Cardiac septum (tissue), 1 donor: ENCODE measurements at regions of chr5 and their contacts with region 1.

Region 1: GRCh38 chr5:73740274-73740790 is 114.3 kb downstream of the ARHGEF28 start:
- DNase-seq: no peak

Region 2: GRCh38 chr5:73066466-73066865 is 673.9 kb before region 1 on chr5:
- intact Hi-C with region 1: no loop called
- DNase-seq: no peak

Region 3: GRCh38 chr5:73448463-73449136 is 291.7 kb before region 1 on chr5 and contains the start of gene FOXD1:
- intact Hi-C with region 1: no loop called
- DNase-seq: no peak
- total RNA-seq, gene FOXD1: 0.54 TPM

Region 4: DNA sequence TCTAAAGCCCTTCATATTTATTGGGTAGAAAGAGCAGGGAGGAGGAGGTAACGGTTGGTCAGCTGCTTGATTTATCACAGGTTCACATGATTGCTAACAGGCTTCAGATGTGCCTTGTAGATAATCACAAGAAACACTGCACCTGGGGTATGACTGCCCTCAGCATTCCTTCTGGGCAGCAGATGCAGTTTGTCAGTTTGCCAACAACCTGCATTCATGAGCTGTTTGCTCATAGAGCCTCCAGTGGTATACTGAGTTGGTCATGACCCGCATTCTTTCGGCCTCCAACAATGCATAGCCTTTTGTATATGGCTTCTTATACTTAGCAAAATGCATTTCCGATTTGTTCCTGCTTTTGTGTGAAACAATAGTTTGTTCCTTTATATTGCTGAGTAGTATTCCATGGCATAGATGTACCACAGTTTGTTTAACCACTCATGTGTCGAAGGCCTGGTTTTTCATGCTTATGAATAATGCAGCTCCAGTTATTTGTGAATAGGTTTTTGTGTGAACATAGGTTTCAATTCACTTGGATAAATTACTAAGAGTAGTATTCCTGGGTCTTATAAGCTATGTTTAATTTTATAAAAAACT is 30.7 kb before region 1 on chr5:
- intact Hi-C with region 1: loop called (anchors 5 kb)
- DNase-seq: no peak